CD8-positive, alpha-beta memory T cell (primary cell): ENCODE measurements at regions of chr1 and their contacts with region 1.

Region 1: DNA sequence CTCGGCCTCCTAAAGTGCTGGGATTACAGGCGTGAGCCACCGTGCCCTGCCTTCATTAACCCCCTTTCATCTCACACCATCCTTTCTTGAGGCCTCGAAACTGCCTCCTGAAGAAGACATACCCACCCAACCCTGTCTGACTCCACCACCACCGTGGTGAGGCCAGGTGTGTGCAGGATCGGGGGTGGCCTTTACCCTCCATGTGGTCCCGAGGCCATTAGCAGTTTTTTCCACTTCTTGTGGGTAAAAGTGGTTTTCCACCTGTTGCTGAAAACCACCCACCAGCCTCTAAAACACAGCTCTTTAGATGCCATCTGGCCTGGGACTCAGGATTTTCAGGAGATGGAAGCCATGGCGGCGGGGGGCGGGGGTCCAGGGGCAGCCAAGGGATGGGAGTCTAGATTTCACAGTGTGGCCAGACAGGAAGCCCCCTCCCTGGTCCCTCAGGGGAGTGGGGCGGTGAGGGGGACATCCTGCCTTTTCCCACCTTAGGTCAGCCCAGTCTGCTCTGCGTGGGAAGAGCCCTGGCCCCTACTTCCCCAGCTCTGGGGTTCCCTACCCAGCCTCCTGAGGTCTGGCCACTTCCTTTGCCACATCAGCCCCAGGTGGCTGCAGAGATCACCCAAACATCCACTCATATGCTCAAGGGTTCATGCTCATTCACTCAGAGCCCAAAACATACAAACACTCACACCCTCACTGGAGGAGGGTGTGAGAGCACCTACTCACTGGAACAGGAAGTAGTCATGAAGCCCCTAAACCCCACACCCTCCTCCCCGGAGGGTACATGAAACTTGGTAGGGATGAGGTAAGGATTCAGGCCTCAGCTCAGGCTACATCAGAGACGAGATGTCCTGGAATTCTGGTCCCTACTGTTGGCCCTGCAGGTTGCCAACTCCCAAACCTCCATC is 2.3 kb downstream of the FGR start:
- DNase-seq: peak in 2 of 5 donors; percentile 34 to 74
- H3K4me3 ChIP-seq: no peak overlapping the region
- H3K4me3 Mint-ChIP-seq: peak overlapping the region; percentile 70 to 81 (median 79)
- H3K27ac ChIP-seq: peak overlapping the region; percentile 2
- H3K27ac Mint-ChIP-seq: peak overlapping the region; percentile 77 to 96 (median 92)
- H3K4me1 ChIP-seq: peaks cover 67% of the 10 kb centered on the region
- H3K4me1 Mint-ChIP-seq: peaks cover 62 to 80% (median 66%) of the 10 kb centered on the region in 3 donors
- H3K27me3 ChIP-seq: no peaks in the 10 kb centered on the region
- H3K27me3 Mint-ChIP-seq: no peaks in the 10 kb centered on the region

Region 2: GRCh38 chr1:27609210-27609555 is 23.5 kb before region 1 on chr1:
- CTCF ChIA-PET with region 1: interaction called, 10 read pairs
- POLR2A ChIA-PET with region 1: interaction called, 3 read pairs
- DNase-seq: no peak
- H3K4me3 ChIP-seq: peak overlapping the region; percentile 26
- H3K4me3 Mint-ChIP-seq: no peak overlapping the region
- H3K27ac ChIP-seq: no peak overlapping the region
- H3K27ac Mint-ChIP-seq: no peak overlapping the region
- H3K4me1 ChIP-seq: peaks cover 64% of the 10 kb centered on the region
- H3K4me1 Mint-ChIP-seq: peaks cover 18 to 37% (median 33%) of the 10 kb centered on the region in 3 donors
- H3K27me3 ChIP-seq: no peaks in the 10 kb centered on the region
- H3K27me3 Mint-ChIP-seq: no peaks in the 10 kb centered on the region